Caco-2 (cell line): ENCODE measurements at regions of chr12 and their contacts with region 1.

Region 1: GRCh38 chr12:21296751-21297406 is 37.8 kb downstream of the SLCO1A2 start:
- DNase-seq: peak in 1 of 2 experiments; percentile 27
- H3K4me3 ChIP-seq: no peak overlapping the region
- H3K4me3 Mint-ChIP-seq: no peak overlapping the region
- H3K27ac Mint-ChIP-seq: no peak overlapping the region
- H3K4me1 ChIP-seq: no peaks in the 10 kb centered on the region
- H3K4me1 Mint-ChIP-seq: no peaks in the 10 kb centered on the region
- H3K27me3 ChIP-seq: no peaks in the 10 kb centered on the region
- H3K27me3 Mint-ChIP-seq: peaks cover 3% of the 10 kb centered on the region
- CTCF ChIP-seq: peak; percentile 87 to 90

Region 2: DNA sequence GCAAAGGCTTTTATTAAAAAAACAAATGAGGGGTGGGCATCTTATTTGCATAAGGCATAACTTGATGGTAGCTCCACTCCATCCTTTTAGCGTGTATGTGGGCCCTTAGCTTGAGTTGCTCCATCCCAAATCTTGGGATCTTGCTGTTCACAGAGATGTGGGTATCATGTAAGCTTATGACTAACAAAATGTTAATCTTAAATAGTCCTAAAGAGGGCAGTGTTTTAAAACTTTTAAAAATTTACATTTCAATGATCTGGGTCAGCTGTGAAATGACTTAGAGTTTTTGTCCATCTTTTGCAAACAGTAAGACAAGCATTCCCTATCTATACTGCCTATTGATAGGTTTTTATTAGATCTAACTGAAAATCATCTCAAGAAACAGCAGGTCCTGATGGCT is 48.2 kb before region 1 on chr12:
- CTCF ChIA-PET with region 1: no interaction called
- POLR2A ChIA-PET with region 1: no interaction called
- intact Hi-C with region 1: no loop called
- DNase-seq: no peak
- H3K4me3 ChIP-seq: no peak overlapping the region
- H3K4me3 Mint-ChIP-seq: no peak overlapping the region
- H3K27ac Mint-ChIP-seq: no peak overlapping the region
- H3K4me1 ChIP-seq: no peaks in the 10 kb centered on the region
- H3K4me1 Mint-ChIP-seq: no peaks in the 10 kb centered on the region
- H3K27me3 ChIP-seq: no peaks in the 10 kb centered on the region
- H3K27me3 Mint-ChIP-seq: peaks cover 7% of the 10 kb centered on the region
- CTCF ChIP-seq: peak in 1 of 2 experiments; percentile 39

Region 3: DNA sequence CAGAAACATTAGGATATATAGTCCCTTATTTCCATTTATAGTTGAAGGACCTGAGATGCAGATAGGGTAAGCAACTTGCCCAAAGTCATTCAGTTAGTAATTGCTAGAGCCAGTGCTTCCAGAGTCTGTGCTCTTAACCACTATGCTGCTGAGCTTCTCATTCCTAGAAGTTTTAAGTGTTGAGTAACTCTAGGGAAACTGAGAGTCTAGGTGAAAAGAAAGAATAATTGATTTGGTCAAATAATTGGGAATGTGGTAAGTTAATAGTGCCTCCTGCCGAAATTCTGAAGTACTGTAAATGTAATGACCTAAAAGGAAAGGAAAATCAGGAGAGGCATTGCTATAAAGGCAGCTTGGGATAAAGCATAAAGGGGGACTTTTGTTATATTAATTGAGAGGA is 154.7 kb after region 1 on chr12:
- CTCF ChIA-PET with region 1: interaction called, 3 read pairs
- POLR2A ChIA-PET with region 1: no interaction called
- intact Hi-C with region 1: loop called (anchors 5 kb)
- DNase-seq: no peak
- H3K4me3 ChIP-seq: no peak overlapping the region
- H3K4me3 Mint-ChIP-seq: no peak overlapping the region
- H3K27ac Mint-ChIP-seq: no peak overlapping the region
- H3K4me1 ChIP-seq: no peaks in the 10 kb centered on the region
- H3K4me1 Mint-ChIP-seq: no peaks in the 10 kb centered on the region
- H3K27me3 ChIP-seq: peaks cover under 1% of the 10 kb centered on the region; the same call in 1 of the 2 replicates
- H3K27me3 Mint-ChIP-seq: no peaks in the 10 kb centered on the region
- CTCF ChIP-seq: peak; percentile 14 to 19